ENCODE measurements at regions of chr2 and their contacts with region 1.

Region 1: DNA sequence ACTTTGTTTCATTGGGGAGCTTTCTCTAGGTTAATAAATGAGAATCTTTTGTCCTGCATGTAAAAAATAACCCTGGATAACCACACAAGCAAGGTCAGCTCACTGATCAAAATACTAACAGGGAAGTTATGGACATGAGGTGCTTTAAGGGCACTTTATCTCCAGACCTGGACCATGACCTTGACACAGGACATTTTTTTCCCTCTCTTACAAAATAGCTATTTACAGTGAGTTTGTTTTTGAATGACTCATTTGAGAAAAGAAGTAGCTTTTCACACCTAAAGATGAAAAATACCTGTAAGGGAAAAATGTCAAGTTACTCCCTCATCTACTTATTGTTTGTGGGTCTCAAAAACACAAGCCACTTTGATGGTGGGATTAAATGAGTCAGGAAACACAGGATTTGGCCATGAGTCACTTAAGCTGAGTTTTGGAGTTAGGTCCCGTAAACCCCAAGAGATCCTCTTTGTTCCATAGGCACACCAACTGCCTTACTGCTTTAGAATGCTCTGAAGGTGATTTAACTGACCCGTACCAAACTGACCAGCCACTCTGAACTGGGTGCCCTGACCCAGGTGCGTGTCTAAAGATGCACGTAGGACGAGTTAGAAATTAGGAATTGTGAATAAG is 479.3 kb upstream of the NXPH2 start:
- DNase-seq: no peak
- H3K4me3 ChIP-seq: no peak overlapping the region
- H3K27ac ChIP-seq: no peak overlapping the region
- H3K4me1 ChIP-seq: no peaks in the 10 kb centered on the region
- H3K27me3 ChIP-seq: no peaks in the 10 kb centered on the region
- CTCF ChIP-seq: no peak
- EP300 ChIP-seq: no peak
- POLR2A ChIP-seq: no peak

Region 2: DNA sequence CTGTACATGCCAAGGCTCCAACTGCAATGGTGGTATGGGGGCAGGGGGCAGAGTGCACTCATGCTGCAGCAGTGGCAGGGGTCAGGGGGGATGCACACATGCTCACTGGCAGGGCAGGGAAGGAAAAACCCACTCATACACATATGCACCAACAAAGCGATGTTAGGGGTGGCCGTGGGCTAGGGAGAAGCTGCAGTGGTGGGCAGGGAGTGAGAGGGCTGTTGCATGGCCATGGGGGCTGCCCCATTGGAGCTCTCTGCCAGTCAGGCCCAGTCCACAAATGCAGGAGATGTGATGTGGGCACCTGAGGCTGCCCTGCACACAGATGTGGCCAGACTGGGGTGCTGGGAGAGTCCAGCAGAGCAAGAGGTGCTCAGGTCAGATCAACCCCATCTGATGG is 241.3 kb before region 1 on chr2:
- intact Hi-C with region 1: no loop called
- DNase-seq: no peak
- H3K4me3 ChIP-seq: no peak overlapping the region
- H3K27ac ChIP-seq: no peak overlapping the region
- H3K4me1 ChIP-seq: no peaks in the 10 kb centered on the region
- H3K27me3 ChIP-seq: no peaks in the 10 kb centered on the region
- CTCF ChIP-seq: no peak
- EP300 ChIP-seq: no peak
- POLR2A ChIP-seq: no peak

Region 3: DNA sequence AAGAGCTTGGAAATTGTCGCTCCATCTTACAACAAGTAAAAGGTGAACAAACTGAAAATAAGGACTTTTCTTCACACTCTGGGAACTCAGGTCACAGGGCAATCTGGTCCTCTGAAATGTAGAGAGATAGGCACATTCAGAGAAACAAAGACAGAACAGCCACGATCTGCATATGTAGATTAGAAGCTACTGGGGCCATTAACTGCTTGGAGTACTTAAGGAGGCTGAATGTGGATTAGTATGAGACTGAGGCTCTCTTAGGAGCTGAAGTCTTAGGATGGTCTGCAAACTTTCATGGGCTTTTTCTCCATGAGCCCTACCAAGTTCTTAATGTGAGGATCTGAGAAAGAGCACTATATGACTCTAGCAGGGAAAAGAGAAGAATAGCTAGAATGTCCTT is 214.0 kb before region 1 on chr2:
- intact Hi-C with region 1: no loop called
- DNase-seq: no peak
- H3K4me3 ChIP-seq: no peak overlapping the region
- H3K27ac ChIP-seq: no peak overlapping the region
- H3K4me1 ChIP-seq: no peaks in the 10 kb centered on the region
- H3K27me3 ChIP-seq: no peaks in the 10 kb centered on the region
- CTCF ChIP-seq: no peak
- EP300 ChIP-seq: no peak
- POLR2A ChIP-seq: no peak

Region 4: DNA sequence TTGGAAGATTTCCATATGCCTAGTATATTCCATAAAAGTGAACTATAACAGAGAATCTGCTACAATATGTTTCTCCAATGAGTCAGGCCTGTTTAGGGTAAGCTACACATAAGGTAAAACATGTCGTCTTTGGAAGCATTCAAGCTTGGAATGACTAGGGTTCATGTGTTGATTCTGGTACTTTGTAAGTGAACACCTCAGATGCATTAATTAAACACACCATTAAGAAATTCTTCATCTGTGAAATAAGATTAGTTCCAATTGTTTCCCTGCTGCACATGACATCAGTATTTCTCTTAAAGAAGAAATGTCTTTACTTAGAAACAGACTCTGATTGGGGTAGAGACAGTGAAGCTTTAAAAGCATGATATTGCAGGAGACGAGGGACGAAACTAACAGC is 18.3 kb before region 1 on chr2:
- intact Hi-C with region 1: loop called in 1 of 4 experiments (anchors 1 kb)
- DNase-seq: no peak
- H3K4me3 ChIP-seq: no peak overlapping the region
- H3K27ac ChIP-seq: no peak overlapping the region
- H3K4me1 ChIP-seq: no peaks in the 10 kb centered on the region
- H3K27me3 ChIP-seq: no peaks in the 10 kb centered on the region
- CTCF ChIP-seq: no peak
- EP300 ChIP-seq: no peak
- POLR2A ChIP-seq: no peak

Measured in ovary (tissue), 10 donors.